ENCODE measurements at regions of chr1 and their contacts with region 1.

Region 1: DNA sequence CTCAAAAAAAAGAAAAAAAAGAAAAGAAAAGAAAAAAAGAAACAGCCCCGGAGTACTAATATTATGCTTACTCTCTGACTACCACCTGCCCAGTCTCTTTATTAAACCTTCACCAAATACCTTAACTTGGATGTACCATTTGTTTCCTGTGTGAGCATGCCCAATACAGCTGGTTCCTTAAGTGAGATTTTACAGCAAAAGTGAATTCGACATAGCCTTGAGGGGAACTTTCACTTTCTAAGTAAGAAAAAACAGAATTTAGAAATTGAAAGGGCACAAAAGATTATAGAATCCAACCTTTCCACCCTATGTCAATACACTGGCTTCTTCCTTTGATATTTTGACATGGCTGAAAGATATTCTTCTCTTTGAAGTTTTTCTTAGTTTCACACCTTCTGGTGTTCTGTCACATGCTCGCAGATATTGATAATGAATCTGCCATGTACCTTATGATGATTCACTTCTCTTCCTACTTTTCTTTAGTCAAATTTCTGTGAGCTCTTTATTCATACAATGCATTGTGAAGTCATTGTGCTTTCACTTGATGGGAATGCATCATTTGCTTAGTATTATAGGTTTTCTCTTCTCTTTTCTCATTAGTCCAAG is 5.2 kb upstream of the GIPC2 start:
- DNase-seq: no peak
- H3K4me3 Mint-ChIP-seq: no peak overlapping the region
- H3K27ac Mint-ChIP-seq: no peak overlapping the region
- H3K4me1 Mint-ChIP-seq: peaks cover 20% of the 10 kb centered on the region
- H3K27me3 Mint-ChIP-seq: peaks cover 26% of the 10 kb centered on the region

Region 2: DNA sequence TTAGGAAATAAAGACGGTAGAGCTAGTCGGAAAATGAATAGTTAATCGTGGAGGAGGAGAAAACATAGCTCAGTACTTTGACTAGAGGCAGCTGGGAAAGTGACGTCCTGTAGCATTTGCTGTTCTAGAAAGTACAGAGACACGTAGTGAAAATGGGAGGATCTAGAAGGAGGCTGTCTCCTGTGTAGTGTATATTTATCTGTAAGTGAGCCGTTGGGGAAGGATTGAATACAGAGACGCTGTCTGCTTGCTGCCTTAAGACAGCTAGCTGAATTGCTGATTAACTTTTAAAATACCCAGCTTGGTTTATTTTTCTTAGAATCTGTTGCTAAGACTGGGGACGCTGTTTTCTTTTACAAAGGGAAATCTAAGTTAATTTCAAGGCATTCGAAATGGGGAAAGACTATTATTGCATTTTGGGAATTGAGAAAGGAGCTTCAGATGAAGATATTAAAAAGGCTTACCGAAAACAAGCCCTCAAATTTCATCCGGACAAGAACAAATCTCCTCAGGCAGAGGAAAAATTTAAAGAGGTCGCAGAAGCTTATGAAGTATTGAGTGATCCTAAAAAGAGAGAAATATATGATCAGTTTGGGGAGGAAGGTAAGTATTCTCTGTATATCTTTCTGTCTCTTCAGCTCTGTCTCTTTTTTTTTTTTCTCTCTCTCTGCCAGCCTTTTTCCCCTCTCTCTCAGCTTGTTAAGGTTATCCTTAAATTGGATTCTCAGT is 35.7 kb before region 1 on chr1 and contains the start of gene DNAJB4:
- intact Hi-C with region 1: loop called (anchors 2 kb)
- DNase-seq: peak; percentile 63
- H3K4me3 Mint-ChIP-seq: peak within 1 kb of the TSS; percentile 94
- H3K27ac Mint-ChIP-seq: peak within 1 kb of the TSS; percentile 98
- H3K4me1 Mint-ChIP-seq: peaks cover 33% of the 10 kb centered on the region
- H3K27me3 Mint-ChIP-seq: no peaks in the 10 kb centered on the region
- total RNA-seq, gene DNAJB4: 12.5 and 14.6 TPM in 2 replicates

Region 3: DNA sequence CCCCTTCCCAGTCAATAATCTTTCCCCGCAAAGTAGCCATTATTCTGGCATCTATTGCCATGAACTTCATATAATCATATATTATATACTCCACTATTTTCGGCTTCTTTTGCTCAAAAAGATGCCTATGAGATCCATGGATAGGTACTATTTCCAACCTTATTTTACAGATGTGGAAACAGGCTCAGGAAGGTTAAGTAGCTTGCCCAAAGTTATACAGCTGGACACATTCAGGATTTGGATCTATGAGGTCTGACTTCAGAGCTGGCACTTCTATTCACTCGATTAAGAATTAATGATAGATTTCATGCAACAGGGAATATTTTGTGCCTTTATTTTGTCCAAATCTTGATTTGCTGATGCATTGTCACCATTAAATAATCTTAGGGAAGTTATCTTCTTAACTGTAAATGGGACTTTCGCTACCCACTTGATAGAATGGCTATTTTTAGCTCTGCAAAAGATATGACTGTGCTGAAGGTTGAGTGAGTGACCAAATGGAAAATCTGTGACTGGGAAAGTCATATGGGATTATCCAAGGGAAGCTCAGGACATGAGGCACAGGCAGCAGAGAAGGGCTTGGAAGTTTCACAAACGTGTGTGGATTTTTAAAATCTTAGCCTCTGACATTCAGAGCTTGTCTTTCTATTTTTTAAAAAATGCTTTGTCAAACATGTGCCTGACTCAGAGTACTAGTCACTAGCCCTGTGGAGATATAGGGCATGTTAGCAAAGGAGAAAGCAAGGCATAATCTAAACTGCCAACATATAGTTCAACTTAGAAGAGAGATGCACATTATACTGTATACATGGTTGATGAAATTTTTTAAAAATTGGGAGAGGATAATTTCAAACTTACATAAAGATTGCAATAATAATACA is 41.6 kb after region 1 on chr1:
- intact Hi-C with region 1: no loop called
- DNase-seq: no peak
- H3K4me3 Mint-ChIP-seq: no peak overlapping the region
- H3K27ac Mint-ChIP-seq: no peak overlapping the region
- H3K4me1 Mint-ChIP-seq: peaks cover 16% of the 10 kb centered on the region
- H3K27me3 Mint-ChIP-seq: peaks cover 3% of the 10 kb centered on the region

Measured in activated T-helper 2 cell treated with anti-CD3 and anti-CD28 coated beads, Interferon-gamma antibody, Interleukin-2, Interleukin-4, amounts not matched to agents 10 μg/mL and 5 μg/mL and 100 μg/mL, durations not matched to agents 14 hours and 24 hours and 36 hours (primary cell).